ENCODE measurements at regions of chr18 and their contacts with region 1.

Region 1: DNA sequence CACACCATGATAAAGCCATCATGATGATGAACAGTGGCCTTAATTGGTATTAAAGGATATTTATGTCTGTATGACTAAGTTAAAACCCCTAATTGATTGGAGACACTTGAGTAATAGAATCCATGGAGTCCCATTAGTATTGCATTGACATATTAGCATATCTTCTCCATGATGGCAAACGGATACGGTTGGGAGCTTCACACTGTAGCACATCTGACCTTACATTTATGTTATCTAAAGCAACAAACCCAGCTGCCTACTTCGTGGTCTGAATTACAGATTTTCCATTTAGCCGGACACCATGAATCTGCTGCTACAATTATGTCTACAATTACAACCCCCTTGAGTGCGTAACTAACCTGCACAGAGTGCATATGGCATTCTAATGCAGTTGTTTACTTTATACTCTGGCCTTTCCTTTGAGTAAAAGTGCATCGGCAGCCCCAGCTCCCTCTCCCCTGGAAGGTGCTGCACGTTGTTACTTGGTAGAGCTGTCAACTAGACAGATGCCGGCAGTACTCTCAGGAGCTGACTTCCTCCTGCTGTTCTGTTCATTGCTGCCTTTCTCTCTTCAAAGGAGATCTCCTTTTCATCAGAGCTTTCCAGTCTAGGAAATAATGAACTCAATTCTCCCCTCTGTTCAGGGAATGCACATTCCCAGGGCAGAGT is 92.1 kb downstream of the LRRC30 start:
- DNase-seq: no peak
- ATAC-seq: no peak

Region 2: GRCh38 chr18:7370802-7371201 is 47.9 kb after region 1 on chr18:
- intact Hi-C with region 1: loop called (anchors 5 kb)
- DNase-seq: peak; percentile 77
- ATAC-seq: peak; percentile 81

Region 3: GRCh38 chr18:7512348-7512747 is 189.4 kb after region 1 on chr18:
- intact Hi-C with region 1: no loop called
- DNase-seq: no peak
- ATAC-seq: peak; percentile 33

Measured in Right ventricle myocardium inferior (tissue), 1 donor.